ENCODE measurements at regions of chr3 and their contacts with region 1.

Region 1: DNA sequence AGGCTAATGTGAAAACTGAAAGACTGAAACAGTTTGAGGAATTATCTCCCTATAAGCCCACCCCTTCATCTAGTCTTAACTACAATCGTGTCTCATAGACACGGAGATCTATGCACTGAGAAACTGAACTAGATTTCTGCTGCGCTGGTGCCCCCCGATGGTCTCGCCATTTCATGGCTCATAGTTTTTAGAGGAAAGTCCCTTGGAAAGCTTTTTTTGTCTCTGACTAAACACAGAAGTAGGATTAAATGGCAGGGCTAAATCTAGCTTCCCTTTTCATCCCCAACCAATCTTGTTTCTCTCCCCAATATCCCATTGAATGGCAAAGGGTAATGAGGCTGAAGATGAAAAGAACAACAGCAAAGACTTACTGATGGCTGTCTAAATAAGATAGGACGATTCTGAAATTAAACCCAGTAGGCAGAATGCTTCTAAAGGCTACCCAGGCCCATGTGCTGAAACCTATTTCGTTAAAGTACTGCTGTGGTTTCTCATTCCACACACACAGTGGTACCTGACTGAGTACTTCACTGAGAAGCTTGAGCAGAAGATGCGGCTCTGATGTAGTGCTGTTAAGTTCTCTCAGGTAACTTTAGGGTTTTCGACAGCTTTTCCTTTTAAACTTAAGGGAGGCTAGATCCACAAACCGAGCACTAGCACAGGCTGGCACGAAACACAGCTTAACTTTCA is 142.7 kb downstream of the GADL1 start:
- DNase-seq: peak; percentile 83
- ATAC-seq: peak; percentile 69
- H3K4me3 Mint-ChIP-seq: no peak overlapping the region
- H3K27ac Mint-ChIP-seq: peak overlapping the region; percentile 44
- H3K4me1 Mint-ChIP-seq: peaks cover 44% of the 10 kb centered on the region
- H3K27me3 Mint-ChIP-seq: peaks cover 2% of the 10 kb centered on the region
- CTCF ChIP-seq: peak; percentile 75

Region 2: DNA sequence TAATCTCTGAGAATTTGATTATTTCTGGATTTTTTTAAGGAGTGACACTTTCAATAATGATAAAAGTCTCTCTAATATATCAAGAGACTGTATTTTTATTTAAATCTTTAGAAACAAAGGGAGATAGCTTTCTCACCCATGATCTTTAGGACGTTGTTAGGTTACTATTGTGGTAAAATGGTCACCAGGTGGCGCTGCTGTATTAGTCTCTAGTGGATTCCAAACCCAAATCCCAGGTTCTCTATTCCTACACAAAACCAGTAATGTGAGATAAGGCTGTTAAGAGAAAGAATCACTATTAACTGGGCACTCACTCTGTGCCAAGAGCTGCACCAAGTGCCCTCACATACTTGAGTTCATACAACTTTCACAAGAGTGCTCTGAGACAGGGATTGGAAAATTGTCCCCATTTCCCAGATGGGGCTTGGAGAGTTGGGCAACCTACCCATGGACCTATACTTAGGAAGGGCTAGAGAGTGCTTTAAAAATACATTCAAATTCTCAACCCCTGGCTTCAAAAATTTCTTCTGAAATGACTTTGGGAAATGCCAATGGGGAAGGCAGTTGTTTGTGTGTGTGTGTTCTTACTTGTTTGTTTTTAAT is 738.7 kb before region 1 on chr3:
- CTCF ChIA-PET with region 1: interaction called, 13 read pairs
- POLR2A ChIA-PET with region 1: no interaction called
- intact Hi-C with region 1: loop called (anchors 10 kb)
- DNase-seq: peak; percentile 74
- ATAC-seq: no peak
- H3K4me3 Mint-ChIP-seq: no peak overlapping the region
- H3K27ac Mint-ChIP-seq: no peak overlapping the region
- H3K4me1 Mint-ChIP-seq: peaks cover 6% of the 10 kb centered on the region
- H3K27me3 Mint-ChIP-seq: peaks cover 9% of the 10 kb centered on the region
- CTCF ChIP-seq: peak; percentile 78

Region 3: GRCh38 chr3:30112902-30113484 is 638.8 kb before region 1 on chr3:
- CTCF ChIA-PET with region 1: interaction called, 11 read pairs
- POLR2A ChIA-PET with region 1: no interaction called
- intact Hi-C with region 1: loop called (anchors 5 kb)
- DNase-seq: no peak
- ATAC-seq: no peak
- H3K4me3 Mint-ChIP-seq: no peak overlapping the region
- H3K27ac Mint-ChIP-seq: no peak overlapping the region
- H3K4me1 Mint-ChIP-seq: peaks cover 3% of the 10 kb centered on the region
- H3K27me3 Mint-ChIP-seq: peaks cover 1% of the 10 kb centered on the region
- CTCF ChIP-seq: peak; percentile 46

Region 4: DNA sequence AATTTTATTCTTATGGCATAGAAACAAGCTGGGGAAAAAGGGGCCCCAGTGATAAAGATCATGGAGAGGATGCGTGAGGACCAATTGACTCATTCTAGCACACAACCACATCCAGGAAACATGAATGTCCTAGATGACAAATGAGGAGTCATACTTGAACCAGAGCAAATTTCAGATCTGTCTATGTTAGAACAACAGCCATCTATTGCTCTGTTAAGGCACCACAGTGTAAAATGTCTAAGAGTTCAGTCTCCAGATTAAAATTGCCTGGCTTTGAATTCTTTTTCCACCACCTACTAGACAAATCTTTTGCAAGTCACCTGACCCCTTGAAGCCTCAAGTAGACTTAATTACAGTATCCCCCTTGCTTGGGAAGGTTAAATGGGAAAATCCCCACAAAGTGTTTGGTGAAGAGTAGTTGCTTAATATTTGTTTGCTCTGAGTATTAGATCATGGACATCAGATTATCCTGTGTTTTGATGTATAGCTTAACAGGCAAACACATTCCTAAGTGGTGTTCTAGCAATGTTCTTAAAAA is 404.0 kb before region 1 on chr3:
- CTCF ChIA-PET with region 1: no interaction called
- POLR2A ChIA-PET with region 1: no interaction called
- intact Hi-C with region 1: loop called (anchors 10 kb)
- DNase-seq: peak; percentile 77
- ATAC-seq: peak; percentile 96
- H3K4me3 Mint-ChIP-seq: peak overlapping the region; percentile 20
- H3K27ac Mint-ChIP-seq: peak overlapping the region; percentile 91
- H3K4me1 Mint-ChIP-seq: peaks cover 84% of the 10 kb centered on the region
- H3K27me3 Mint-ChIP-seq: peaks cover 1% of the 10 kb centered on the region
- CTCF ChIP-seq: no peak

Region 5: GRCh38 chr3:30586096-30586805 is 165.5 kb before region 1 on chr3:
- CTCF ChIA-PET with region 1: no interaction called
- POLR2A ChIA-PET with region 1: no interaction called
- intact Hi-C with region 1: no loop called
- DNase-seq: no peak
- ATAC-seq: no peak
- H3K4me3 Mint-ChIP-seq: no peak overlapping the region
- H3K27ac Mint-ChIP-seq: no peak overlapping the region
- H3K4me1 Mint-ChIP-seq: no peaks in the 10 kb centered on the region
- H3K27me3 Mint-ChIP-seq: no peaks in the 10 kb centered on the region
- CTCF ChIP-seq: no peak

Region 6: GRCh38 chr3:30768703-30769685 is 17.2 kb after region 1 on chr3:
- CTCF ChIA-PET with region 1: interaction called, 19 read pairs
- POLR2A ChIA-PET with region 1: interaction called, 6 read pairs
- intact Hi-C with region 1: no loop called
- DNase-seq: peak; percentile 89
- ATAC-seq: peak; percentile 39
- H3K4me3 Mint-ChIP-seq: no peak overlapping the region
- H3K27ac Mint-ChIP-seq: no peak overlapping the region
- H3K4me1 Mint-ChIP-seq: peaks cover 3% of the 10 kb centered on the region
- H3K27me3 Mint-ChIP-seq: peaks cover 2% of the 10 kb centered on the region
- CTCF ChIP-seq: peak; percentile 75

Region 7: DNA sequence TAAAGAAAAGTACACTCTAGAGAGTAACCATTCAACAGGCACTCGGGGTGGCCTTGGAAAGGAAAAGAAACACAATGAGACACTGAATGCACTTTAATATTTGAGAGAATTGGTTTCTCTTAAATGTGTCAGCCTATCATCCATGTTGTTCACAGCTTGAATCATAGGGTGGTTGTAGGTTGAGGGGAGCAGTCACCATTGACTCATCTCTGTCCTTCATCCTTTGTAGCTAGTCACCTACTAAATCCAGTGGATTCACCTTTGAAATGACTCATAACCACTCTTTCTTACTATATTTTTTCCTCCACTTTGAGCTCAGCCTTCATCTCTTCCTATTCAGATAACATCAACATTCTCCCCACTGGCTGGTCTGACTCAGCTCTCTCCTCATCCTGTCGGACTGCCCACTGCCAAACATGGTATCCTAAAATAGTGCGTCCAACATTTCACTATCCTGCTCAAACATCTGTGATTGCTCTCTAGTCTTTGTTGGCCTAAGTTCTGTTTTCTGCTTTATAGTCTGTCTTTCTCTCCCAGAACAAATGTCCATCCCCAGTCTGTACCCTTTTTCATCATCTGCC is 325.4 kb after region 1 on chr3:
- CTCF ChIA-PET with region 1: no interaction called
- POLR2A ChIA-PET with region 1: no interaction called
- intact Hi-C with region 1: no loop called
- DNase-seq: peak; percentile 53
- ATAC-seq: peak; percentile 98
- H3K4me3 Mint-ChIP-seq: no peak overlapping the region
- H3K27ac Mint-ChIP-seq: peak overlapping the region; percentile 22
- H3K4me1 Mint-ChIP-seq: peaks cover 14% of the 10 kb centered on the region
- H3K27me3 Mint-ChIP-seq: no peaks in the 10 kb centered on the region
- CTCF ChIP-seq: no peak

Measured in activated CD8-positive, alpha-beta T cell treated with anti-CD3 and anti-CD28 coated beads for 36 hours (primary cell).